PC-3 (cell line): ENCODE measurements at regions of chr1 and their contacts with region 1.

Region 1: DNA sequence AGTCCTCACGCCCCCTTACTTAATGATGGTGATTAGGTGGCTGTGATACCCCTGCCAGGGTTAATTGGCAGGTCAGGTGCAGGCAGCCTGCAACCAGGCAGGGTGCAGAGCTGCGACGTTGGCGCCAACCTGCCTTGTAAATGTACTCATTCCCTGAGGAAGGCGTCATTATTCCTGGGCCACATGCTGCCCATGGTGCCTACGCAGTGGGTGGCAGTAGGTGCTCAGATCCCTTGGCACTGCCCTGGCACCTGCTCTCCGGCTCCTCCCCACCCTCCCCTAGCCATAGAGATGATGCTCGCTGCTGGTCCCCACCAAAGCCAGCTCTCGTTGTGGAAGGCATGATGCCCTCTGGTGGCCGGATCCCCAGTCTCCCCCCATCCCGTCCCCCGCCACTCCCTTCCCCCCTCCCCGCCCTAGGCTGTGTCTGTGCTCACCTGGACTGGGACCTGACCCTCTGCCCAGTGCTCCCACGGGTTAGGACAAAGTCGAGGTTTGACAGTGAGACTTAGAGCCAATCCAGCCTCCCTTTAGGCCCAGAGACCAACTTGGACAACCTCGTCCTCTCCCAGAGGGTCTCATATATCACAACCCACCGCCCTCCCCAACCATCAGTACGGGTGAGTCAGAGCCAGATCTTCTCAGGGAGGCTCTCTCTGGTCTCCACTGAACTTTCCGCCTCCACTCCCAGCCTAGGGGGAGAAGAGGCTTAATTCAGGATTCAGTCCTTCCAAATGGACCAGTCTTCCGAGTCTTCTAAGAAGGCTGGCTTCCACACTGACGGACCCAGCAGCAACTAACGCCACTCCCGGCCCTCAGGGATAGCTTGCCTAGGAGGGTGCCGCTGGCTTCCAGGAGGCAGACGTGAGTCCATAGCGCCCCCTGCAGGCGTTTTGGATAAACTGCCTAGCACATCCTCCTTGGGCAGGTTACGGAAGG is 5.7 kb downstream of the KRTCAP2 start:
- DNase-seq: peak; percentile 94
- ATAC-seq: peak; percentile 86
- H3K4me3 ChIP-seq: peak overlapping the region; percentile 67
- H3K27ac ChIP-seq: peak overlapping the region; percentile 19
- H3K4me1 ChIP-seq: peaks cover 12% of the 10 kb centered on the region; the same call in 1 of the 2 replicates
- H3K27me3 ChIP-seq: no peaks in the 10 kb centered on the region
- CTCF ChIP-seq: peak; percentile 99

Region 2: GRCh38 chr1:155135415-155136028 is 31.9 kb before region 1 on chr1 and contains the start of gene SLC50A1:
- CTCF ChIA-PET with region 1: interaction called, 8 read pairs
- POLR2A ChIA-PET with region 1: interaction called, 8 read pairs
- intact Hi-C with region 1: loop called (anchors 1 kb)
- DNase-seq: peak; percentile 97
- ATAC-seq: peak; percentile 73
- H3K4me3 ChIP-seq: peak within 1 kb of the TSS; percentile 87
- H3K27ac ChIP-seq: peak within 1 kb of the TSS; percentile 94
- H3K4me1 ChIP-seq: peaks cover 54% of the 10 kb centered on the region
- H3K27me3 ChIP-seq: no peaks in the 10 kb centered on the region
- CTCF ChIP-seq: no peak
- total RNA-seq, gene SLC50A1: 59.2 and 75.2 TPM in 2 replicates

Region 3: GRCh38 chr1:155463865-155464650 is 296.6 kb after region 1 on chr1:
- CTCF ChIA-PET with region 1: no interaction called
- POLR2A ChIA-PET with region 1: no interaction called
- intact Hi-C with region 1: no loop called
- DNase-seq: no peak
- ATAC-seq: no peak
- H3K4me3 ChIP-seq: no peak overlapping the region
- H3K27ac ChIP-seq: no peak overlapping the region
- H3K4me1 ChIP-seq: peaks cover 13% of the 10 kb centered on the region; the same call in 1 of the 2 replicates
- H3K27me3 ChIP-seq: no peaks in the 10 kb centered on the region
- CTCF ChIP-seq: no peak